PC-9 (cell line): ENCODE measurements at regions of chr2 and their contacts with region 1.

Region 1: DNA sequence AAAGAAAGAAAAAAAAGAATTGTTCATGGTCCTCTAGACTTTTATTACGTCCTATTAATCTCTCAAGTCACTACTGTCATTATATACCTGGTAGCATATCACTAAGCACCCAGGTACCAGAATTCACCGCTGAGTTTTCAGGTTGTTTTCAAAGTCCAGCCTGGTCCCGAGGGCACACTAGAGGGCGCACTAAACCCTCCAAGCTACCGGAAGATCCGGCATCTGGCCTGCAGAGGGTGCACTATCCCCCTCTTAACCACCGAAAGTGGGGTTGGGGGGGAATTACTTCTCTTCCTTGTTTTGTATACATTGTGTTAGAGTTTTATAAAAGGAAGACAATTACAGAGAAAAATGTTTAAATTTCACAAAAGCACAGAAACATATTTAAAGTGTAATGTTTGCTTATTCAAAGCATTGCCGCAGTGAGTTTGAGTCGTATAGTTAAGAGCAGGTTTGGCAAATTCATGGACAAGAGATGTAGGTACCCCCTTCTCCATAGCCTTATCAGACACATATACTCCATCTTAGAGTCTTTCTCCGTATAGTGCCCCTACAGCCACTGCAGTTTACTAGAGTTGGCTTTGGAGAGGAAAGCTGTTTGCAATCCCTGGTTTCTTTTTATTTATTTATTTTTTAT is 19.2 kb downstream of the MOGAT1 start:
- DNase-seq: peak; percentile 80 to 87
- H3K4me3 ChIP-seq: no peak overlapping the region
- H3K27ac ChIP-seq: no peak overlapping the region
- H3K4me1 ChIP-seq: no peaks in the 10 kb centered on the region
- H3K27me3 ChIP-seq: no peaks in the 10 kb centered on the region
- CTCF ChIP-seq: peak; percentile 100

Region 2: GRCh38 chr2:222677981-222678380 is 12.7 kb before region 1 on chr2:
- CTCF ChIA-PET with region 1: interaction called, 15 read pairs
- POLR2A ChIA-PET with region 1: no interaction called
- intact Hi-C with region 1: no loop called
- DNase-seq: no peak
- H3K4me3 ChIP-seq: no peak overlapping the region
- H3K27ac ChIP-seq: no peak overlapping the region
- H3K4me1 ChIP-seq: no peaks in the 10 kb centered on the region
- H3K27me3 ChIP-seq: no peaks in the 10 kb centered on the region
- CTCF ChIP-seq: no peak

Region 3: GRCh38 chr2:222939208-222939856 is 248.7 kb after region 1 on chr2:
- CTCF ChIA-PET with region 1: interaction called, 4 read pairs
- POLR2A ChIA-PET with region 1: no interaction called
- intact Hi-C with region 1: loop called (anchors 1 kb)
- DNase-seq: peak; percentile 69 to 81
- H3K4me3 ChIP-seq: no peak overlapping the region
- H3K27ac ChIP-seq: peak overlapping the region; percentile 0; the same call in 1 of the 2 replicates
- H3K4me1 ChIP-seq: peaks cover 33% of the 10 kb centered on the region
- H3K27me3 ChIP-seq: no peaks in the 10 kb centered on the region
- CTCF ChIP-seq: peak; percentile 99

Region 4: DNA sequence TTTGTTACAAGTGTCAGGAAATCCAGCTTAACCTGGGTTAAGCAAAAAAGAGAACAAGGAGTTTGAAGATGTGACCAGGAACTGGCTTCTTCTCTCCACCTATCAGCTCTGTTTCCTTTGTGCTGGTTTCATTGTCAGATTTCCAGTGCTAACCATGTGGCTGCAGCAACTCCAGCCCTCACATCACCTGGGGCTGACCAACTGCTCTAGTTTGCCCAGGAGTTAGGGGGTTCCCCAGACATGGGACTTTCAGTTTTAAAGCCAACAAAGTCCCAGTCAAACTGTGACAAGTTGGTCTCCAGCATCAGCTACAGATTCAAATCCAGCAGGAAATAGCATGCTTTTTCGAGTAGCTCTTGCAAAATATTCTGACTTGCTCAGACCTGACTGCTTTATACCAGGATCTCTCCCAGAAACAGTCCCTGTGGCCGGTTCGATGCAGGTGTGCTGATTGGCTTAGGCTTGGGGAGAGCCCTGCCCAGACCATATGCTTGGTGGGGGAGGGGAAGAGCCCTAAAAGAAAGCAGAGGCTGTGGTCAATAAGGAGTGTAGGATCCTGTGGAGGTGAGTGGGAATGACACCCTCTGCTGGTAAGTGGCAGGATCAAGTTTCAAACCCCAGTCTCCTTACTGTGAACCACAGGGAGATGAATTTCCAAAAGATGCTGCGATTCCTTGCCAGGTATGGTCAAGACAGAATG is 410.8 kb after region 1 on chr2:
- CTCF ChIA-PET with region 1: interaction called, 3 read pairs
- POLR2A ChIA-PET with region 1: no interaction called
- intact Hi-C with region 1: loop called (anchors 1 kb)
- DNase-seq: peak in 1 of 2 experiments; percentile 51
- H3K4me3 ChIP-seq: no peak overlapping the region
- H3K27ac ChIP-seq: no peak overlapping the region
- H3K4me1 ChIP-seq: peaks cover 5% of the 10 kb centered on the region; the same call in 1 of the 2 replicates
- H3K27me3 ChIP-seq: no peaks in the 10 kb centered on the region
- CTCF ChIP-seq: peak; percentile 86